Astrocyte of the cerebellum (primary cell): ENCODE measurements at regions of chrX and their contacts with region 1.

Region 1: DNA sequence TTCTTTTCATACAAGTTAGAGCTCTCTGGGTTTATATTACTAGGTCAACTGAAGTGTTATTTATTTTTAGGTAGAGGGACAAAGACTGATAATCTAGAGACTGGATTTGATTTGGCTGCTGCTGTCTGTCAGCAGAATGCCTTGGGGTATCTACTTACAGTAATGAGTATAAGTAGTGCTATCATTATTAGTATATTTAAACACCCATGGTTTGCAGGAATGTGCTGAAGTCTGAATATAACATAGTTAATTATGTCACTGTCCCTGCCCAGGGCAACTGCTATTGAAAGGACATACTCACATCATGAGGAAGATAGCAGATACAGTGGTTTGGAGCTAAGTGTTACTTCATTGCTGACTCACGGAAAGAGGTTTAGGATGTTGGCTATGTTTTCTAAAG is 76.2 kb downstream of the PRRG1 start:
- DNase-seq: no peak
- H3K4me3 ChIP-seq: no peak overlapping the region
- CTCF ChIP-seq: no peak

Region 2: DNA sequence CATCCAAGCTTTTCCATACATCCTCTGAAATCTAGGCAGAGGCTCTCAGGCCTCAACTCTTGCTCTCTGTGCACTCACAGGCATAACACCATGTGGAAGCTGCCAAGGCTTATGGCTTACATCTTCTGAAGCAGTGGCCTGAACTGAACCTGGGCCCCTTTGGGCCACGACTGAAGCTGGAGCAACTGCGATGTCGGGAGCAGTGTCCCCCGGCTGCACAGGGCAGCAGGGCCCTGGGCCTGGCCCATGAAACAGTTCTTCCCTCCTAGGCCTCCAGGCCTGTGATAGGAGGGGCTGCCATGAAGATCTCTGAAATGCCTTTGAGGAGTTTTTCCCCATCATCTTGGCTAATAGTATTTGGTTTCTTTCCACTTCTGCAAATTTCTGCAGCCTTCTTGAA is 37.0 kb before region 1 on chrX:
- in situ Hi-C with region 1: loop called (anchors 5 kb)
- DNase-seq: no peak
- H3K4me3 ChIP-seq: no peak overlapping the region
- CTCF ChIP-seq: no peak

Region 3: GRCh38 chrX:37491686-37492085 is 66.3 kb after region 1 on chrX:
- in situ Hi-C with region 1: no loop called
- DNase-seq: no peak
- H3K4me3 ChIP-seq: no peak overlapping the region
- CTCF ChIP-seq: no peak

Region 4: DNA sequence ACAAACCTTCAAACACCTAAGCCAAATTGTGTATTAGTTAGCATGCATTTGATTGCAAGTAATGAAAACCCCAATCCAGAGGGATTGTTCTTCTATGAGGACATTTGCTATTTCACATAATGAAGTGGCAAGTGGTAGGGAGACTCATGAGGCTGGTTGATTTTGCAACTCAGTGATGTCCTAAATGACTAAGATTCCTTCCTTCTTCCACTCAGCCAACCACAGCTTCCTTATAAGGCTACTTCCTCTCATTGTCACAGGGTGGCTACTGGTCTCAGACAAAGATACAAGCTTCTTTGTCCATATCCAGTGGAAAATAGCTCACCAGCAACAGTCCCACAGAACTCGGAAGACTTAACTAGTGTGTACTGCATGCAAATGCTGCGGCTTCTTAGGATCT is 921.8 kb after region 1 on chrX:
- in situ Hi-C with region 1: no loop called
- DNase-seq: peak; percentile 5
- H3K4me3 ChIP-seq: no peak overlapping the region
- CTCF ChIP-seq: no peak